ENCODE measurements at regions of chr3 and their contacts with region 1.

Region 1: DNA sequence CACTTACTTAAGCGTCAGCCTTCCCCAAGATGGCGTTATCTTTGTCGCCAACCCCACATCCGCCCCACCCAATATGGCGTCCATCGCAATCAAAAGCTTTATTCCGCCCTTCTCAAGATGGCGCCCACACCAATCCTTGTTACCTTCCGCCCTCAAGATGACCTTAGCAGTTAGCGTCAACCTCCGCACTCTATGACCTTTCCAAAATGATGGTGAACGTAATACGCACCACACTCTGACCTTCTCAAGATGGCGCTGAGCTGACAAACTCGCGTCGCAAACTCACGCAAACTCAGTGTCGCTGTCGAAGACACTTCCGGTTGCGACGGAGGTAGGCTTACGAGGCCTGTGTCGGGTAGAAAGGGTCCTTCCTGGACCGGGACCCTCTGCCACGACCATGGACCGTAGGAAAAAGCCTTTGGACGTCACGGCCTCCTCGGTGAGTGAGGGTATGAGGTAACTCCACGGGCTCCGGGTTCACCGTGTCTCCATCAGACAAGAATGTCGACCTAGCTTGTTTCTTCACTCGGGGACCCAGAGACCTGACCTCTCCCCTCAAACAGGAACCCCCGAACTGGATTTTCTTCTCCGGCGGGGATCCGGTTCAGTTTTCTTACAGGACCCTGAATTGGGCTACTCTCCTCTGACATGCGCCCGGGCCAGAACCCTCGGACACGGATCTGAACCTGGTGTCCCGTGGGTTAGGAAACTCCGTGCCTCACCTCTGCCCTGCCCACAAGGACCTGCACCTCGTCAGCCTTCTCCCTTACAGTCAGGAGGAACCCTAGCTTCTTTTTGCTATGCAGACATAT is at the start of gene CCDC174:
- DNase-seq: peak; percentile 89 to 100 (median 93)
- ATAC-seq: peak; percentile 97
- H3K4me3 ChIP-seq: peak within 1 kb of the TSS; percentile 74 to 85
- H3K4me3 Mint-ChIP-seq: peak within 1 kb of the TSS; percentile 98
- H3K27ac ChIP-seq: peak within 1 kb of the TSS; percentile 95 to 97
- H3K27ac Mint-ChIP-seq: peak within 1 kb of the TSS; percentile 99
- H3K4me1 ChIP-seq: peaks cover 31% of the 10 kb centered on the region
- H3K4me1 Mint-ChIP-seq: peaks cover 60% of the 10 kb centered on the region
- H3K27me3 ChIP-seq: no peaks in the 10 kb centered on the region
- H3K27me3 Mint-ChIP-seq: no peaks in the 10 kb centered on the region
- CTCF ChIP-seq: no peak
- total RNA-seq, gene CCDC174: 48.8 to 50.9 TPM

Region 2: DNA sequence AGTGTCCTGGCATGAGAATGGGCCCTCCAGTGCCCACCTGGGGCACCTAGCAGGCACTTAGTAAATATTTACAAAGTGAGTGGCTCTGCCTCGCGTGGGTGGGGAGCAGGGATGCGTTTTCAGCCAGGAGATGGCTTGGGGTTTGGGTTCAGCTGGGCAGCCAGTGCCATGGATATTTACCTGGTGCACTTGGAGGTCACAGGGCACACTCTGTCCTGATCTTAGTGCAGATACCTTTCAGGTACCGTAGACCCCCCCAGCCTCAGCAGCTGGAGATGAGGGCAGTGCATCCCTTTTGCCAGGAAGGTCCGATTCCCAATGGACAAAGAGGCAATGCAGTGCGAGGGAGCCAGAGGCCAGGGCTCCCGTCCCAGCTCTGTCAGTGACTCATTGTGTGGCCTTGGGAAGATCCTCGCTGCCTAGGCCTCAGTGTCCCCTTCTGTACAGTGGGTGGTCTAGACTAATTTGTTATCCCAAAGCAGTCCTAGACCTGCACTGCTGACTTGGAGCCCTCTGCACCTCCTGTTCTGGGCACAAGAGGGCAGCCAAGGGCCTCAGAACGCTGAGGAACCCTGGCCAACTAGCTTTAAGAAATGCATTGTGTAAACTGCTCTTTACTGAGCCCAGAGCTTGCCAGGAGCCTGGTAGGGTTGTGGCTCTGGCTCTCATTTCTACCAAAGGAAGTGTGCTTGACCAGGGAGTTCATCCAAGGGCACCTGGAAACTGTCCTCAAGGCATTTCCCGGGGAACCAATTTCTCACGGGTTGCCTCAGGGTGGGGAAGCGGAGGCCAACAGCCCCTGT is 1155.5 kb before region 1 on chr3:
- CTCF ChIA-PET with region 1: no interaction called
- POLR2A ChIA-PET with region 1: no interaction called
- intact Hi-C with region 1: loop called in 1 of 2 experiments (anchors 10 kb)
- DNase-seq: peak; percentile 51 to 81 (median 68)
- ATAC-seq: peak; percentile 99
- H3K4me3 ChIP-seq: no peak overlapping the region
- H3K4me3 Mint-ChIP-seq: no peak overlapping the region
- H3K27ac ChIP-seq: no peak overlapping the region
- H3K27ac Mint-ChIP-seq: no peak overlapping the region
- H3K4me1 ChIP-seq: no peaks in the 10 kb centered on the region
- H3K4me1 Mint-ChIP-seq: no peaks in the 10 kb centered on the region
- H3K27me3 ChIP-seq: no peaks in the 10 kb centered on the region
- H3K27me3 Mint-ChIP-seq: no peaks in the 10 kb centered on the region
- CTCF ChIP-seq: peak; percentile 76

Region 3: GRCh38 chr3:14402304-14402811 is 249.3 kb before region 1 on chr3 and contains the start of gene SLC6A6:
- CTCF ChIA-PET with region 1: interaction called, 3 read pairs
- POLR2A ChIA-PET with region 1: interaction called, 8 read pairs
- intact Hi-C with region 1: loop called in 1 of 2 experiments (anchors 5 kb)
- DNase-seq: peak; percentile 87 to 98 (median 95)
- ATAC-seq: peak; percentile 79
- H3K4me3 ChIP-seq: peak within 1 kb of the TSS; percentile 72 to 85
- H3K4me3 Mint-ChIP-seq: peak within 1 kb of the TSS; percentile 97
- H3K27ac ChIP-seq: peak within 1 kb of the TSS; percentile 70 to 91
- H3K27ac Mint-ChIP-seq: peak within 1 kb of the TSS; percentile 96
- H3K4me1 ChIP-seq: peaks cover 34% of the 10 kb centered on the region
- H3K4me1 Mint-ChIP-seq: peaks cover 46% of the 10 kb centered on the region
- H3K27me3 ChIP-seq: no peaks in the 10 kb centered on the region
- H3K27me3 Mint-ChIP-seq: no peaks in the 10 kb centered on the region
- CTCF ChIP-seq: peak; percentile 46
- total RNA-seq, gene SLC6A6: 25.8 to 30.9 TPM

Region 4: GRCh38 chr3:14947886-14948555 is 296.4 kb after region 1 on chr3:
- CTCF ChIA-PET with region 1: no interaction called
- POLR2A ChIA-PET with region 1: interaction called, 28 read pairs
- intact Hi-C with region 1: loop called (anchors 1 kb)
- DNase-seq: peak; percentile 92 to 98 (median 95)
- ATAC-seq: peak; percentile 88
- H3K4me3 ChIP-seq: peak overlapping the region; percentile 98 to 99
- H3K4me3 Mint-ChIP-seq: peak overlapping the region; percentile 99
- H3K27ac ChIP-seq: peak overlapping the region; percentile 97 to 99
- H3K27ac Mint-ChIP-seq: peak overlapping the region; percentile 100
- H3K4me1 ChIP-seq: peaks cover 22% of the 10 kb centered on the region
- H3K4me1 Mint-ChIP-seq: peaks cover 70% of the 10 kb centered on the region
- H3K27me3 ChIP-seq: no peaks in the 10 kb centered on the region
- H3K27me3 Mint-ChIP-seq: no peaks in the 10 kb centered on the region
- CTCF ChIP-seq: no peak

Region 5: GRCh38 chr3:15427182-15427880 is 775.7 kb after region 1 on chr3 and contains the starts of genes EAF1 and METTL6:
- CTCF ChIA-PET with region 1: no interaction called
- POLR2A ChIA-PET with region 1: interaction called, 3 read pairs
- intact Hi-C with region 1: loop called in 1 of 2 experiments (anchors 10 kb)
- DNase-seq: peak; percentile 64 to 90 (median 86)
- ATAC-seq: peak; percentile 82
- H3K4me3 ChIP-seq: peak within 1 kb of the TSS; percentile 87 to 96
- H3K4me3 Mint-ChIP-seq: peak within 1 kb of the TSS; percentile 99
- H3K27ac ChIP-seq: peak within 1 kb of the TSS; percentile 81
- H3K27ac Mint-ChIP-seq: peak within 1 kb of the TSS; percentile 98
- H3K4me1 ChIP-seq: peaks cover 43% of the 10 kb centered on the region
- H3K4me1 Mint-ChIP-seq: peaks cover 66% of the 10 kb centered on the region
- H3K27me3 ChIP-seq: no peaks in the 10 kb centered on the region
- H3K27me3 Mint-ChIP-seq: no peaks in the 10 kb centered on the region
- CTCF ChIP-seq: peak; percentile 24
- total RNA-seq, gene EAF1: 33.7 to 36.0 TPM
- total RNA-seq, gene METTL6: 4.1 to 4.9 TPM

Region 6: GRCh38 chr3:15585111-15585845 is 933.6 kb after region 1 on chr3:
- CTCF ChIA-PET with region 1: no interaction called
- POLR2A ChIA-PET with region 1: no interaction called
- intact Hi-C with region 1: no loop called
- DNase-seq: no peak
- ATAC-seq: no peak
- H3K4me3 ChIP-seq: no peak overlapping the region
- H3K4me3 Mint-ChIP-seq: no peak overlapping the region
- H3K27ac ChIP-seq: no peak overlapping the region
- H3K27ac Mint-ChIP-seq: no peak overlapping the region
- H3K4me1 ChIP-seq: no peaks in the 10 kb centered on the region
- H3K4me1 Mint-ChIP-seq: no peaks in the 10 kb centered on the region
- H3K27me3 ChIP-seq: no peaks in the 10 kb centered on the region
- H3K27me3 Mint-ChIP-seq: no peaks in the 10 kb centered on the region
- CTCF ChIP-seq: no peak